A549 (cell line): ENCODE measurements at regions of chr2 and their contacts with region 1.

Region 1: GRCh38 chr2:62456721-62457539 is 49.1 kb downstream of the TMEM17 start:
- DNase-seq: peak; percentile 79 to 85
- ATAC-seq: peak; percentile 91 to 96
- H3K4me3 ChIP-seq: peak overlapping the region; percentile 46
- H3K27ac ChIP-seq: peak overlapping the region; percentile 95 to 99
- H3K4me1 ChIP-seq: peaks cover 42% of the 10 kb centered on the region
- CTCF ChIP-seq: peak; percentile 99
- EP300 ChIP-seq: 0 out of 5 replicates have a peak, but pooled peaks of 1 of the 2 experiments have one; percentile 18
- POLR2A ChIP-seq: peak; percentile 28; the same call in 1 of the 2 replicates
- RAD21 ChIP-seq: peak; percentile 97 to 100

Region 2: DNA sequence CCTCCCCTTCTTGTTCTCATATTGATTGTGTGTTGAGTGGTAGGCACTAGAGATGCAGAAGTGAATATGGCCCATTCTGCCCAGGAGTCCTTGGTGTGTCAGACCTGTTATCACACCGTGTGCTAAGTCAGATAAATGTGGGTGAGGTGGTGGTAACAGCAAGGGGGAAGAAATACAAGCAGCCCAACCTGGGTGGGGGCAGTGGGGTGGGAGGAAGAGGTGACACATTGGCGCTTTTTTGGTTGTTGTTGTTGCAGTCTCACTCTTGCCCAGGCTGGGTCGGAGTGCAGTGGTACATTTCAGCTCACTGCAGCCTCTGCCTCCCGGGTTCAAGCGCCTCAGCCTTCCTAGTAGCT is 248.2 kb before region 1 on chr2:
- CTCF ChIA-PET with region 1: no interaction called
- POLR2A ChIA-PET with region 1: no interaction called
- DNase-seq: no peak
- ATAC-seq: no peak
- H3K4me3 ChIP-seq: no peak overlapping the region
- H3K27ac ChIP-seq: no peak overlapping the region
- H3K4me1 ChIP-seq: peaks cover 6% of the 10 kb centered on the region; the same call in 2 of the 3 replicates
- CTCF ChIP-seq: no peak
- EP300 ChIP-seq: no peak
- POLR2A ChIP-seq: no peak
- RAD21 ChIP-seq: no peak

Region 3: DNA sequence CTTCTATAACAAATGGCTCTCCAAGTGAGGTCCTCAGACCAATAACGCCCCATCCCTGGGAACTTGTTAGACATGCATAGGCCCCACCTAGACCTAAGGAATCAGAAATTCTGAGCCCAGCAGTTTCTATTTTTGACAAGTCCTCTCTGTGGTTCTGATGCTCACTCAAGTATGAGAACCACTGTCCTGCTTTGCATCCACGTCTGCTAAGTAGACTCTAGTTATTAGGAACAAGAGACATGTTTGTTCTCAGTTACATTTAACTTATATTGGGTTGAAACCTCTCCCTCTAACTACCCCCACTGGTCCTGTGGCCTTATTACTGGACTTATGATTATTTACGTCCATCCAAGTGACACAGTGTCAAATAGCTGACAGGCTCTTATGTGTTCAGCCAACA is 21.2 kb before region 1 on chr2:
- CTCF ChIA-PET with region 1: interaction called, 27 read pairs
- POLR2A ChIA-PET with region 1: no interaction called
- DNase-seq: no peak
- ATAC-seq: no peak
- H3K4me3 ChIP-seq: no peak overlapping the region
- H3K27ac ChIP-seq: no peak overlapping the region
- H3K4me1 ChIP-seq: no peaks in the 10 kb centered on the region
- CTCF ChIP-seq: no peak
- EP300 ChIP-seq: no peak
- POLR2A ChIP-seq: no peak
- RAD21 ChIP-seq: no peak

Region 4: GRCh38 chr2:62475172-62476011 is 18.5 kb after region 1 on chr2:
- CTCF ChIA-PET with region 1: interaction called, 59 read pairs
- POLR2A ChIA-PET with region 1: no interaction called
- DNase-seq: no peak
- ATAC-seq: no peak; a peak in 1 of 6 replicates
- H3K4me3 ChIP-seq: no peak overlapping the region
- H3K27ac ChIP-seq: peak overlapping the region in 1 of 2 experiments; percentile 36; a peak in 3 of 6 replicates
- H3K4me1 ChIP-seq: no peaks in the 10 kb centered on the region
- CTCF ChIP-seq: no peak
- EP300 ChIP-seq: no peak
- POLR2A ChIP-seq: no peak
- RAD21 ChIP-seq: no peak

Region 5: DNA sequence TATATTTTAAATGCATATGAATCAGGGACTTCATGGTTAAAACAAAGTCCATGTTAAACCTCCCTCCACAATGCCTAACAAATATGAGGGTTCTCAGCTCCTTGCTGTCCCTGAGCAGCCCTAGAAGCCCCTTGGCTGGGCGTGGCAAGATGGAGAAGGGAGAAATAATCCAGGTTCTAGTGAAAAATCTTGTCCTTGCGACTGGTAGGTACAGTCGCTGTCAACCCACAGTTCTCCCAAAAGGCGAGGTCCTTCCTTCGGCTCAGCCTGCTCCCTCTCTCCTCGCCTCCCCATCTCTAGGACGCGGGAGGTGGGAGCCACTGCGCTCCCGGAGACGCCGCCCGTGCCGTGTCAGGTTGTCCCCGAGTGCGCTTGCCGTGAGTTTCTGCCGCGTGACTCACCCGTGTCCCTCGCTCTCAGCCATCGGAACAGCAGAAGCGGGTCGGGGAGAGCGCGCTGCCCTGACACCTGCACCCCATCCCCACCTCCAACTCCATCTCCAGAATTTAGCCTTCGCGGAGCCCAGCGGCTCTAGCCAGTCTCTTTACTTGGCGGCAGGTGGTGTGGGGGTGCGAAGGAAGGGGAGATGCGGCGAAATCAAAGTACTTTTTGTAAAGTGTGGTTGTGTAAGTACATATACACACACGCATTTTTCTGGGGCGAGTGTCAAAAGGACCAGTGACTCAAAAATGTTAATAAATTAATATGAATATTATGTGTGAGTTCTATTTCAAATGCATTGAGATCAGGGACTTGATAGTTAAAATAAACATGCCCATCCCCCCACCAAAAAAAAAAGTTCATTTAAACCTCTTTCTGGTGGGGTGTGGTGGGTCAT is 114.2 kb after region 1 on chr2:
- CTCF ChIA-PET with region 1: interaction called, 22 read pairs
- POLR2A ChIA-PET with region 1: interaction called, 12 read pairs
- DNase-seq: peak; percentile 58 to 63
- ATAC-seq: peak; percentile 61 to 64
- H3K4me3 ChIP-seq: peak overlapping the region; percentile 36
- H3K27ac ChIP-seq: peak overlapping the region; percentile 94 to 96
- H3K4me1 ChIP-seq: peaks cover 65% of the 10 kb centered on the region
- CTCF ChIP-seq: no peak
- EP300 ChIP-seq: peak; percentile 43 to 70; a peak in 3 of 5 replicates
- POLR2A ChIP-seq: peak; percentile 14; the same call in 1 of the 2 replicates
- RAD21 ChIP-seq: no peak; a peak in 1 of 5 replicates

Region 6: GRCh38 chr2:62724886-62725711 is 268.2 kb after region 1 on chr2:
- CTCF ChIA-PET with region 1: interaction called, 19 read pairs
- POLR2A ChIA-PET with region 1: interaction called, 3 read pairs
- DNase-seq: peak; percentile 46 to 78
- ATAC-seq: peak; percentile 92 to 95
- H3K4me3 ChIP-seq: no peak overlapping the region
- H3K27ac ChIP-seq: peak overlapping the region; percentile 63 to 79
- H3K4me1 ChIP-seq: peaks cover 68% of the 10 kb centered on the region
- CTCF ChIP-seq: peak; percentile 67
- EP300 ChIP-seq: no peak; a peak in 1 of 5 replicates
- POLR2A ChIP-seq: no peak
- RAD21 ChIP-seq: peak; percentile 75 to 79

Region 7: DNA sequence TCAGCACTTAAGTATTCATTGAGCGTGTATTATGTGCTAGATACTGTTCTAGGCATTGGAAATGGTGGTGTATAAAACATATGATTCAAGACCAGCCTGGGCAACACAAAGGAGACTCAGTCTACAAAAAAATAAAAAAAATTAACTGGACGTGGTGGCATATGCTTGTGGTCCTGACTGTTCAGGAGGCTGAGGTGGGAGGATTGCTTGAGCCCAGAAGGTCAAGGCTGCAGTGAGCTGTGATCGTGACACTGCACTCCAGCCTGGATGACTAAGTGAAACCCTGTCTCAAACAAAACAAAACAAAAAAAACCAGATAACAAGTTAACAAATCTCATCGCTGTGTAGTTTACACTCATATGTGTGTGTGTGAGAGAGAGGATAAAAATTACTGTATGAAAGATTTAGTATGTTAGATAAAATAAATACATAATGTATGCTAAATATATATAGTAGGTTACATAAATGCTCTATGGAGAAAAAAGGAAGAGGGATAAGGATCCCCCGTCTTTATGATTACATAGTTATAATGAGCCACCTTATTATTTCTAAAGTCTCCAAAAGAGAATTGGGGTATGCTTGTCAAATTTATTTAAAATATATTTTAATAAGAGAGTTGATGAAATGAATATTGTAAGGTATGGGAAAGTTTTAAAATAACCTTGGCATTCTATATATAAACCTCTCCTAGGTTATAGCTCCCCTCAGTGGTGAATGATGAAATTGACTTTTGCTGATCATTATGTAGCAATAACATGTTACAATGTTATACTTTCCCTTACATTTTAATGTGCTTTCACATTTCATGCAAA is 317.8 kb after region 1 on chr2:
- CTCF ChIA-PET with region 1: interaction called, 318 read pairs
- POLR2A ChIA-PET with region 1: interaction called, 12 read pairs
- DNase-seq: peak in 1 of 2 experiments; percentile 83
- ATAC-seq: peak; percentile 72 to 89; a peak in 5 of 6 replicates
- H3K4me3 ChIP-seq: no peak overlapping the region
- H3K27ac ChIP-seq: peak overlapping the region; percentile 74 to 86
- H3K4me1 ChIP-seq: peaks cover 66% of the 10 kb centered on the region
- CTCF ChIP-seq: peak; percentile 95
- EP300 ChIP-seq: no peak
- POLR2A ChIP-seq: no peak
- RAD21 ChIP-seq: peak; percentile 94 to 97